Dendritic cell treated with granulocyte-macrophage colony-stimulating factor and Interleukin-4, amounts not matched to agents 40 ng/mL and 50 ng/mL, for 4 days (primary cell): ENCODE measurements at regions of chr2 and their contacts with region 1.

Region 1: GRCh38 chr2:48420512-48421197 is 109.3 kb upstream of the STON1 start:
- H3K4me3 Mint-ChIP-seq: peak overlapping the region; percentile 1
- H3K27ac Mint-ChIP-seq: peak overlapping the region; percentile 51
- H3K4me1 Mint-ChIP-seq: peaks cover 7% of the 10 kb centered on the region
- H3K27me3 Mint-ChIP-seq: no peaks in the 10 kb centered on the region

Region 2: DNA sequence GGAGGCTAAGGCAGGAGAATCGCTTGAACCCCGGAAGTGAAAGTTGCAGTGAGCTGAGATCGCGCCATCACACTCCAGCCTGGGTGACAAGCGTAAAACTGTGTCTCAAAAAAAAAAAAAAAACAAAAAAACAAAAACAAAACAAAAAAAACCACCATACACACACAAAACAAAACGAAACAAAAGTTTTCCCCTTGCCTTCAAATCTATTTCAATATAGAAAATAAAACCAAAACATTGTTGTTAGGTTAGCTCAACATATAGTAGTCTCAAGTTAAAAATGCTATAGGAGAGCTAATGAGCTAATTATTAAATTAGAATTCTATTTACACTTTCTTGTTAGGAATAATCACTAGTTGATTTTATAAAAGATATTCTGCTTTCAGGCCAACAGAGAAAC is 557.7 kb before region 1 on chr2:
- intact Hi-C with region 1: loop called (anchors 5 kb)
- H3K4me3 Mint-ChIP-seq: no peak overlapping the region
- H3K27ac Mint-ChIP-seq: no peak overlapping the region
- H3K4me1 Mint-ChIP-seq: peaks cover 30% of the 10 kb centered on the region
- H3K27me3 Mint-ChIP-seq: no peaks in the 10 kb centered on the region

Region 3: GRCh38 chr2:48227617-48228344 is 192.9 kb before region 1 on chr2:
- intact Hi-C with region 1: loop called (anchors 10 kb)
- H3K4me3 Mint-ChIP-seq: no peak overlapping the region
- H3K27ac Mint-ChIP-seq: peak overlapping the region; percentile 79
- H3K4me1 Mint-ChIP-seq: peaks cover 24% of the 10 kb centered on the region
- H3K27me3 Mint-ChIP-seq: no peaks in the 10 kb centered on the region

Region 4: DNA sequence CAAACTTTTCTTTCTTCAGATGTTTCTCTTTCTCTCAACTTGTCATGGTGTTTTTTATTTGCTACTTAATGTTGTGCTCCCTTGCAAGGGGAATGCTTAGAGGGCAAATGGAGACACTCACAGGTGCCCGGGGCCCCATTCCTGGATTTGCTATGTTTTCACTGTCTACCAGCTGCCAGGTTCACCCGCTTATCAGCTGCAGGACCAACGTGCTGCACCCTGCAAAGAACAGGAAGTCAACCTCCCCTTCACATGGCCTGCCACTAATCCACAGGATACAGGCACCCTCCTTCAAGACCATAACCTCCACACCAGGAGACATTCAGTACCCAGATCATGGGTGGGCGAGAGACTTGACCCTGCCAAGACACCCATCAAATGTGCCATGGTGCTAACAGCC is 128.3 kb before region 1 on chr2:
- intact Hi-C with region 1: no loop called
- H3K4me3 Mint-ChIP-seq: no peak overlapping the region
- H3K27ac Mint-ChIP-seq: no peak overlapping the region
- H3K4me1 Mint-ChIP-seq: peaks cover 6% of the 10 kb centered on the region
- H3K27me3 Mint-ChIP-seq: no peaks in the 10 kb centered on the region

Region 5: GRCh38 chr2:48383046-48383445 is 37.6 kb before region 1 on chr2:
- intact Hi-C with region 1: loop called (anchors 5 kb)
- H3K4me3 Mint-ChIP-seq: no peak overlapping the region
- H3K27ac Mint-ChIP-seq: no peak overlapping the region
- H3K4me1 Mint-ChIP-seq: no peaks in the 10 kb centered on the region
- H3K27me3 Mint-ChIP-seq: no peaks in the 10 kb centered on the region

Region 6: DNA sequence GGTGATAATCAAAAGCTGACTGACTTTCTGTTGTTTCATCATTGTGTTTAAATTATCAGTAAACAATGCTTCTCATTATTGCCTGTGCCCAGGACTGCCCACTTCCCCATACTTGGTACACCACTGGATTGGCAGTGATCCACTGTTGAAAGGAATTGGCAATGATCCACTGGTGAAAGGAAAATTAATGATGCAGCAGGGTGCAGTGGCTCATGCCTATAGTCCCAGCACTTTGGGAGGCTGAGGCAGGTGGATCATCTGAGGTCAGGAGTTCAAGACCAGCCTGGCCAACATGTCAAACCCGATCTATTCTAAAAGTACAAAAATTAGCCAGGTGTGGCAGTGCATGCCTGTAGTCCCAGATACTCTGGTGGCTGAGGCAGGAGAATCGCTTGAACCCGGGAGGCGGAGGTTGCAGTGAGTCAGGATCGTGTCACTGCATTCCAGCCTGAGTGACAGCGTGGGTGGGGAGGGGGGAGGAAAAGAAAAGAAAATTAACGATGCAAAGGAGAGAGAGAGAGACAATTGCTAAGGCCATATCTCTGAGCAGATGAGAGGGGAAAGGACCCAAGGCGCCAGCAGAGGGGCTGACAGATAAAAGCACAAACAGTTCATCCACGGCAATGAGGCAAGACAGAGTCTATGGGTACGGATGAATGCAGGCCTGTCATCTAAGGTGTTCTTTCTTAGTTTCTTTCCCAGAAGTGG is 186.8 kb after region 1 on chr2:
- intact Hi-C with region 1: no loop called
- H3K4me3 Mint-ChIP-seq: no peak overlapping the region
- H3K27ac Mint-ChIP-seq: no peak overlapping the region
- H3K4me1 Mint-ChIP-seq: no peaks in the 10 kb centered on the region
- H3K27me3 Mint-ChIP-seq: peaks cover 4% of the 10 kb centered on the region